ENCODE measurements at regions of chr6 and their contacts with region 1.

Region 1: DNA sequence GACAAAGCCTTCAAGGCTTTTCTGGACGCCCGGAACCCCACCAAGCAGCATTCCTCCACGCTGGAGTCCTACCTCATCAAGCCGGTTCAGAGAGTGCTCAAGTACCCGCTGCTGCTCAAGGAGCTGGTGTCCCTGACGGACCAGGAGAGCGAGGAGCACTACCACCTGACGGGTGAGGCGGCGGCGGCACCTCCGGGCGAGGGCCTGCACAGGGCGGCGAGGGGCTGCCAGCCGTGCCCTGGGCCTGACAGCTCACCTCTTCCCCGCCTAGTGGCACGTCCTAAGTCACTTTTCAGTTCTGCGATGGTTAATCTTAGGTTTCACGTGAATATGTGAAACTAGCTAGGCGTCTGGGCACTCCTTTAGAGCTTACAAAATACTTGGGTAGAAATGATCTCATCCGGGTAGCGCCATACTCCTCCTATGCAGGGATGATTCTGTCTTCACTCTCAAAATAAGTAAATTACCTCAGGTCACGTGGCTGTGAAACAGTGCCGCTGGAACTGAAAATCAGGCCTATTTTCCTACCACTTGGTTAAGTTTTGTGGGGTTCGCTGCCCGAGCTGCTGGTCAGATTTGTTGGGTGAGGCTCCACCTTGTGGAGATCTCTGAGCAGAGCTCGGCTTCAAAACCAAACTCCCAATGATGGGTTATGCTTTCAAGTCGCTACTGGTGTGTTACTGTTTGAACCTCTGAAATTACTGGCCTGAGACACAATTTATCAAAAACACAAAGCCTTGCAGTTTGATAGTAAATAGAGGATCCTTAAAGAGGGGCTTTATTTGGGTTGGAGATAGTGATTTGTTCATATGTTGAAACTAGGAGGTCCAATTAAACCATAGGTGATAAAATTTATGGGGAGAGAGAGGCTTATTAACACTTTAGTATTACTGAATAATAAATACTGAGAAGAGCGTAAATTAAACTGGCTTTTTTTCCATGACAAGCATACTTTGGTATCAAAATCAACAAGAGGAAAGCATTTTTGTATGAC is 15.5 kb upstream of the CLDN20 start:
- DNase-seq: peak in 1 of 2 donors; percentile 66
- ATAC-seq: peak; percentile 83
- H3K4me3 ChIP-seq: peak overlapping the region in 1 of 2 donors; percentile 0
- H3K27ac ChIP-seq: peak overlapping the region in 1 of 2 donors; percentile 2
- H3K4me1 ChIP-seq: no peaks in the 10 kb centered on the region
- H3K27me3 ChIP-seq: no peaks in the 10 kb centered on the region

Region 2: GRCh38 chr6:154868143-154868594 is 380.1 kb before region 1 on chr6:
- intact Hi-C with region 1: loop called in 1 of 2 experiments (anchors 10 kb)
- DNase-seq: no peak
- ATAC-seq: peak; percentile 54
- H3K4me3 ChIP-seq: no peak overlapping the region
- H3K27ac ChIP-seq: no peak overlapping the region
- H3K4me1 ChIP-seq: peaks cover 0 to 3% of the 10 kb centered on the region in 2 donors
- H3K27me3 ChIP-seq: no peaks in the 10 kb centered on the region

Region 3: DNA sequence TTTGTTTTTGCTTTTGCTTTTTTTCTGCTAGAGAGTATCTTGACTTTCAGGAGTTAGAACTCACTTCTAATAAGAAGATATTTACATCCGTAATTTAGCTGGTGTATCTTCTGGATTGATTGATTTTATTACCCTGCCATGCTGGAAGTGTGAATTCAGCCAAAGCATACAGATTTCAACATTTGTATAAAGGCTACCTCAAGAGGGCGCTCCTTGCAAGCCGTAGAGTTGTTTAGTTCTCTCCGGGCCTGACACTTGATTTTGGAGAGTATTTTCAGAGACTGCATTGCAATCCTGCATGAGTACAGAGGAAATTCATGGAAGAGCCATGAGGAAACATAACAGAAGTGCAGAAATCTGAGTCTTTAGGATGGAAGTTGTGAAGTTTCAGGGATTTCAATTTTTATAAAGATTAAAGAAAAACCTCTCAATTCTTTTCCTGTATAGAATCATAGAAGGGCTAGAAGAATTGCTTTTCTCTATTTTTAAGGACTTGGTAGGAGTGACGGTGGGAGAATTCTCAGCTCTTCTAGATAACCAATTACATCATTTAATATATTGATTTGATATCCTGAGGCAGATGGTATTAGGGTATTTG is 319.9 kb before region 1 on chr6:
- intact Hi-C with region 1: loop called (anchors 5 kb)
- DNase-seq: no peak
- ATAC-seq: peak; percentile 58
- H3K4me3 ChIP-seq: no peak overlapping the region
- H3K27ac ChIP-seq: no peak overlapping the region
- H3K4me1 ChIP-seq: no peaks in the 10 kb centered on the region
- H3K27me3 ChIP-seq: no peaks in the 10 kb centered on the region

Region 4: DNA sequence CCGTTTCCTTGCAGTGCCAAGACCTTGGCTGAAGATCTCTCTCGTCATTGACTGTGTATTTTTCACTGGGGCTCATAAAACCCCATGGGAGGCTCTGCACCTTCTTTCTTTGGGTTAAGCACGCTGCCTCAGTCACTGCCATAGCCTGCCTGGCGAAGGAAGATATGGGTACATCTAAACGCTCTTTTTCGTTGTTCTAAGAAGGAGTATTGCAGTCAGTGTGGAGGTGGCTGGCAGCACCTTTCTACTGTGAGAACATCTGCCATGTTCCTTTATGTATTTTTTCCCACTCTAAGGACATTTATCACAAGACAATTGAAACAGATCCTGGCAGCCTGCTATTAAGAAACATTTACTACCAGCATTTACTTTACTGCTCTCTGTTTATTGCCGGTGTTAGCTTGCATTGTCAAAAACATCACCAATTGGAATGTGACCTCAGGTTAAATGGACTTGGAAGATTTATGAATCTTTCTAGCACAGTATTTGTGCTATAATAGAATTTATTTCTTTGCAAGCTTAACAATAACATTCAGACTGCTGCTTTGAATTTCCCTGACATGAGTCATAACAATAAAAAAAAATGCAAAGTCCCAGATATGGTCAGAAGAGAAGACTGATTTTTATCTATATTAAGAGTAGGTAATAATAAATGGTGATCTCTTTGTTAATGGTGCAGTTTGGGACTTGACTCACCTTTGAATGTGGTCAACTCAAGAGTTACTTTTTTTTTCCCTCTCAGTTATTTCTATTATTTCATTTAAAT is 46.7 kb before region 1 on chr6:
- intact Hi-C with region 1: no loop called
- DNase-seq: no peak
- ATAC-seq: peak; percentile 41
- H3K4me3 ChIP-seq: no peak overlapping the region
- H3K27ac ChIP-seq: peak overlapping the region in 1 of 2 donors; percentile 64
- H3K4me1 ChIP-seq: peaks cover 0 to 4% of the 10 kb centered on the region in 2 donors
- H3K27me3 ChIP-seq: no peaks in the 10 kb centered on the region